ENCODE measurements at regions of chr3 and their contacts with region 1.

Region 1: GRCh38 chr3:187974871-187975271 is 179.1 kb upstream of the LPP start:
- DNase-seq: no peak
- H3K4me3 Mint-ChIP-seq: peak overlapping the region; percentile 62
- H3K27ac Mint-ChIP-seq: peak overlapping the region; percentile 92
- H3K4me1 Mint-ChIP-seq: peaks cover 63% of the 10 kb centered on the region
- H3K27me3 Mint-ChIP-seq: no peaks in the 10 kb centered on the region

Region 2: DNA sequence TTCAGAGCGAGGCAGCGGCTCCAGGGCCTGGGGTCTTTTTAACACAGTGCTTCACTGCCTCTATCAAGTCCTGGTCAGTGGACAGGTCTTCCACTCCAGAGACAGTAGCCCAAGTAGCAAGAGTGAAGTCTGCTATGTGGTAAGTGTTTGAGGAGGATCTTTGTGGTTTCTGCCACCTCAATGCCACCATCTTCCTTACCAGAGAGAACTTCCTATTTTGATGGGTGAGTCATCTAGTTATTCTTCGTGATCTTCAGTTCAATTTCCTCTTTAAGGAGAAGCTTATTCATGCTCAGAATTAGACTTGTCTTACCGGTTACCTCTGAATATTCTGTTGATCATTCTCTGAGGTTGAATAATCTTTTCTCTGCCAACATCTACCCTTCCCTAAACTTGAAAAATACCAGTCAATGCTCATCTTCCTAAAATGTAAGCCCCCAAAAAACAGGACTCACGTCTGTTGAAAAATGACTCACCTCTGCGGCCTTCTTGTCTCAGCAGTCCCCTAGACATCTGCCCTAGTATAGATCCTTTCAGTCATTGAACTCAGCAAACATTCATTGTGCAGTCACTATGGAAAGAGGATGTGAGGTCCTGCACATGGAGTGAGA is 197.4 kb before region 1 on chr3:
- CTCF ChIA-PET with region 1: no interaction called
- POLR2A ChIA-PET with region 1: no interaction called
- intact Hi-C with region 1: loop called (anchors 10 kb)
- DNase-seq: peak; percentile 72
- H3K4me3 Mint-ChIP-seq: peak overlapping the region; percentile 21
- H3K27ac Mint-ChIP-seq: peak overlapping the region; percentile 91
- H3K4me1 Mint-ChIP-seq: peaks cover 50% of the 10 kb centered on the region
- H3K27me3 Mint-ChIP-seq: no peaks in the 10 kb centered on the region

Region 3: GRCh38 chr3:187986514-187986934 is 11.7 kb after region 1 on chr3:
- CTCF ChIA-PET with region 1: interaction called, 11 read pairs
- POLR2A ChIA-PET with region 1: interaction called, 10 read pairs
- intact Hi-C with region 1: loop called (anchors 1 kb)
- DNase-seq: peak; percentile 77
- H3K4me3 Mint-ChIP-seq: peak overlapping the region; percentile 2
- H3K27ac Mint-ChIP-seq: peak overlapping the region; percentile 83
- H3K4me1 Mint-ChIP-seq: peaks cover 56% of the 10 kb centered on the region
- H3K27me3 Mint-ChIP-seq: no peaks in the 10 kb centered on the region

Region 4: DNA sequence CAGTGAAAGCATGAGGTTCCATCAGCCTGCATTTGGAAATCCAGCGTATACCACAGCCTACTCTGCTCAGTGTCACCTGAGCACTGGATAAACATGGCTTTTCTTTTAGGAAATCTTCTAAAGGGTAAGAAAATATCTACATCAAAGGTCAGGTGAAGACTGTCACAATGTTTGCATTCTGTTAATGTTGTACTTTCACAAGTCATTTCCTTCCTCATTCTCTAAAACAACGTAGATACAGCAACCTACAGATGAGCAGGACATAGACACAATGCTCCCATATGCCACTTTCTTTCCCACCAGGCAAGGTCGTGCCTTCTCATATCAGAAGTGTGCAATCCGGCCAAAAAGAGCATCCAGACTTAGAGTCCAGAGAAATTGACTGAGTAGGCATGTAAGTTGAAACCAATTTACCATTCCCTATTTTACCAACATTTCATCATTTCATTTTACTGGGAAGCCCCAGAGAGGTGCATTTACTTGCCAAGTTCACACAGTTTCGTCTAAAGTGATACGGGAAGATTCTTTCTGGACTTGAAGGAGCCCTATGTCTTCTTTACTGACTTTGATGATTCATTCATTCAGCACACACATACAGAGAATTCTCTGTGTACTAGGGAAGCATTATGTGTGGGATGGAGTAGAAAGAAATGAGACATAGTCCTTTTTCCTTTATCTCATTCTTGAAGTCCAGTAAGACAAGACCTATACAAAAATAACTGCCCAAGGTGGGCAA is 148.5 kb after region 1 on chr3:
- CTCF ChIA-PET with region 1: no interaction called
- POLR2A ChIA-PET with region 1: no interaction called
- intact Hi-C with region 1: loop called (anchors 1 kb)
- DNase-seq: peak; percentile 21
- H3K4me3 Mint-ChIP-seq: no peak overlapping the region
- H3K27ac Mint-ChIP-seq: peak overlapping the region; percentile 63
- H3K4me1 Mint-ChIP-seq: peaks cover 20% of the 10 kb centered on the region
- H3K27me3 Mint-ChIP-seq: peaks cover 1% of the 10 kb centered on the region

Region 5: GRCh38 chr3:188286087-188286513 is 311.2 kb after region 1 on chr3:
- CTCF ChIA-PET with region 1: interaction called, 3 read pairs
- POLR2A ChIA-PET with region 1: interaction called, 5 read pairs
- intact Hi-C with region 1: loop called (anchors 1 kb)
- DNase-seq: peak; percentile 42
- H3K4me3 Mint-ChIP-seq: no peak overlapping the region
- H3K27ac Mint-ChIP-seq: peak overlapping the region; percentile 34
- H3K4me1 Mint-ChIP-seq: peaks cover 51% of the 10 kb centered on the region
- H3K27me3 Mint-ChIP-seq: no peaks in the 10 kb centered on the region

Region 6: DNA sequence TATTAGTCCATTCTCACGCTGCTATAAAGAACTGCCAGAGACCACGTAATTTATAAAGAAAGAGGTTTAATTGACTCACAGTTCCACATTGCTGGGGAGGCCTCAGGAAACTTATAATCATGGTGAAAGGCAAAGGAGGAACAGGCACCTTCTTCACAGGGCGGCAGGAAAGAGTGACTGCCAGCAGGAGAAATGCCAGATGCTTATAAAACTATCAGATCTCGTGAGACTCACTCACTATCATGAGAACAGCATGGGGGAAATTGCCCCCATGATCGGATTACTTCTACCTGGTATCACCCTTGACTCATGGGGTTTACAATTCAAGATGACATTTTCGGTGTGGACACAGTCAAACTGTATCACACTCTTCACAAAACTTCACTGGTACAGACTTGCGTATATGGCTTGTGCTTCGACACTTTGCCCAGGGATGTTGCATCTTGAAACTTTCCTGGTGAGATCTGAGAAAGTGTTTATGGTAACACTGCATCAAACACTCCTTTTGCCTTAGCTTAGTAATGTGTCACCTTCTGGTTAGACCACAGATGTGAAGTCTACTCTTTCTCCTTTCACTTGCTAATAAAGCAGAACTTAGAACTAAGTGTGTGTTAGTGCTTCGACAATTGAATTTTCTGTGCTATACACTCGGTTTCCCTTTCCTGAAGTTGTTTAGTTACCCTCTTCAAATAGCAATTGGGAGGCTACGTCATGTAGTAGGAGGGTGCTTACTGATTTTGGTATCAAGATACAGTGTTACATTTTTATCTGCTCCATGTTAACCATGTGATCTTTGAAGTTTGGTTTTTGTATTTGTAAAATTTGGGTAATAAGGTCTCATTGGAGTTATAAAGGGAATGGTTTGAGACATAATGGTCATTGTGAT is 364.8 kb after region 1 on chr3:
- CTCF ChIA-PET with region 1: no interaction called
- POLR2A ChIA-PET with region 1: no interaction called
- intact Hi-C with region 1: loop called (anchors 1 kb)
- DNase-seq: peak; percentile 75
- H3K4me3 Mint-ChIP-seq: peak overlapping the region; percentile 68
- H3K27ac Mint-ChIP-seq: peak overlapping the region; percentile 93
- H3K4me1 Mint-ChIP-seq: peaks cover 44% of the 10 kb centered on the region
- H3K27me3 Mint-ChIP-seq: peaks cover 2% of the 10 kb centered on the region

Region 7: DNA sequence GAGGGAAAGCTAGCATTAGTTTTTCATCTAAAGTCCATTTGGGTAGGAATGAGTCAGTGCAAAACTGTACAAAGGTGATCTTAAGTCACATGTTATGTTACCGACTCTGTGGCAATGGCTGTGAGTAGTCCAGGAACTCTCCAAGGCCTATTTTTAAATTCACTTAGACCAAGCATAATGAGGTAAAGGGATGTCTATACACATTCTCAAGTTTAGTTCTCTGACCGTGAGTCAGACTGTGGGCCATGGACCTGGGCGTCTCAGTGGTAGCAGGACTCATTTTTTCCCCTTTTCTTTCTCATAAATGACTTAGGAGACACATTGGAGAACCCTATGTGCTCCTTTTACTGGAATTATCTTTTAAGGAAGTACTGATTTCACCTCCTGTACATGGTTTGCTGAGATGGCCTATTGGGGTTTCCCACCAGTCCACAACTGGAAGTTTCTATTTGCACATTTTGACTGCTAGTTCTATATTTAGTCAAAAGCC is 708.2 kb after region 1 on chr3:
- CTCF ChIA-PET with region 1: no interaction called
- POLR2A ChIA-PET with region 1: no interaction called
- intact Hi-C with region 1: no loop called
- DNase-seq: peak; percentile 74
- H3K4me3 Mint-ChIP-seq: no peak overlapping the region
- H3K27ac Mint-ChIP-seq: peak overlapping the region; percentile 40
- H3K4me1 Mint-ChIP-seq: peaks cover 41% of the 10 kb centered on the region
- H3K27me3 Mint-ChIP-seq: no peaks in the 10 kb centered on the region

Region 8: DNA sequence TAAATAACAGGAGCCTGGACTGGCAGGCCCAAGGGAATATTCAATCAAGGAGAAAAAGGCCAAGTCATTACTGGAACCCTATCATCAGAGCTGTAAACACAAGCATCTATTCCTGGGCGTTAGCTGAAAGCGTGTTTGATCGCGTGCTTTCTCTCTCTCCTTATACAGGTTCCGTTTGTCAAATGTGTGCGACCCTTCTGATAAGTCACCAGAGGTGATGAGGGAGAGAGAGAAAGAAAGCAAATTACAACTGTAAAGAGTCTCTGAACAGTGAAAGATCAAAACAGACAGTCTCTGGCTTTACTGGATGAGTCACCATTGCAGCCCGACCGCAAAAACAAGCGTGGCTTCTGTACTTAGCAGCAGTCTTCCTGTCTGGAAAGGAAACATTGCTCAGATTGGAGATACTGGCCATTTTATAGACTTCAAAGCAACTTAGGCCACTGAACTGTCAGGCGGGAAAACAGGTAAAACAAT is 1157.4 kb after region 1 on chr3:
- CTCF ChIA-PET with region 1: no interaction called
- POLR2A ChIA-PET with region 1: no interaction called
- intact Hi-C with region 1: loop called (anchors 10 kb)
- DNase-seq: peak; percentile 90
- H3K4me3 Mint-ChIP-seq: peak overlapping the region; percentile 50
- H3K27ac Mint-ChIP-seq: peak overlapping the region; percentile 83
- H3K4me1 Mint-ChIP-seq: peaks cover 26% of the 10 kb centered on the region
- H3K27me3 Mint-ChIP-seq: no peaks in the 10 kb centered on the region

Measured in activated CD4-positive, alpha-beta memory T cell treated with anti-CD3 and anti-CD28 coated beads for 36 hours (primary cell).